ENCODE measurements at regions of chr9 and their contacts with region 1.

Region 1: GRCh38 chr9:34646211-34647083 is at the start of gene GALT:
- H3K4me3 ChIP-seq: peak within 1 kb of the TSS; percentile 82
- H3K27ac ChIP-seq: peak within 1 kb of the TSS; percentile 84
- H3K4me1 ChIP-seq: no peaks in the 10 kb centered on the region; the same call in 1 of the 2 replicates
- CTCF ChIP-seq: peak; percentile 98

Region 2: GRCh38 chr9:34584970-34585369 is 61.5 kb before region 1 on chr9:
- CTCF ChIA-PET with region 1: no interaction called
- POLR2A ChIA-PET with region 1: no interaction called
- H3K4me3 ChIP-seq: no peak overlapping the region
- H3K27ac ChIP-seq: no peak overlapping the region
- H3K4me1 ChIP-seq: no peaks in the 10 kb centered on the region
- CTCF ChIP-seq: no peak

Region 3: DNA sequence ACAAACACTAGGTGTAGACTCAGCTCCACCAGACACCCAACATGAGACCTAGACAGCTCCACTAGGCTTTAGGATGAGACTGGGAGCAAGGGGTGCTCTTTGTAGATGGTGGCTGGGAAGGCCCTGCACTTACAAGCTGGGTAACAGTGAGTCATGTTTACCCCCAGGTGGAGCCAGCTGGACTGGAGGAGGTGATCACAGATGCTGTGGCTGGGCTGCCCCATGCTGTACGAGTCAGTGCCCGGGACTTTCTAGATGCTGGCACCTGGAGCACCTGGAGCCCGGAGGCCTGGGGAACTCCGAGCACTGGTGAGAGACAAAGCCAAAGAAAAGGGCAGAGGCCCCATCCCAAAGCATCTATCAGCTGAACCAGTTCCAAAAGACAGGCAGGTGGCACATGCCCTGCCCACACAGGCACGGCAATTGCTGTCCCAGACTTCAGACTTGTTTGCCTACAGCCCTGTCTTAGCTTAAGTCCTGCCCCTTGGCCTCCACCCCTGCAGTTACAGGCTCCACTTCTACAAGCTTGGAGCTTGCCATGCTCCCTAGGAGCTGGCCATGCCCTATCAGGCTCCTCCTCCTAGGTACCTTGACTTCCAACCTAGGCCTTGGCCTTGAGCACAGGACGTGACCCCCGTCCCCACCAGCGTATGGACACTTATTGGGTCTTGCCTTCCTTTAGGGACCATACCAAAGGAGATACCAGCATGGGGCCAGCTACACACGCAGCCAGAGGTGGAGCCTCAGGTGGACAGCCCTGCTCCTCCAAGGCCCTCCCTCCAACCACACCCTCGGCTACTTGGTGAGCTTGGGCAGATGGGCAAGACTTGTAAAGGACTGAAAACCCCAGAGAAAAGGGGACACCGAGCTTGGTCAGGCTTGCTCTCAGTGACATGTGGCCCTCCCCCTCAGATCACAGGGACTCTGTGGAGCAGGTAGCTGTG is 13.4 kb after region 1 on chr9:
- CTCF ChIA-PET with region 1: interaction called, 17 read pairs
- POLR2A ChIA-PET with region 1: interaction called, 14 read pairs
- H3K4me3 ChIP-seq: no peak overlapping the region
- H3K27ac ChIP-seq: no peak overlapping the region
- H3K4me1 ChIP-seq: peaks cover 3% of the 10 kb centered on the region; the same call in 1 of the 2 replicates
- CTCF ChIP-seq: no peak

Region 4: DNA sequence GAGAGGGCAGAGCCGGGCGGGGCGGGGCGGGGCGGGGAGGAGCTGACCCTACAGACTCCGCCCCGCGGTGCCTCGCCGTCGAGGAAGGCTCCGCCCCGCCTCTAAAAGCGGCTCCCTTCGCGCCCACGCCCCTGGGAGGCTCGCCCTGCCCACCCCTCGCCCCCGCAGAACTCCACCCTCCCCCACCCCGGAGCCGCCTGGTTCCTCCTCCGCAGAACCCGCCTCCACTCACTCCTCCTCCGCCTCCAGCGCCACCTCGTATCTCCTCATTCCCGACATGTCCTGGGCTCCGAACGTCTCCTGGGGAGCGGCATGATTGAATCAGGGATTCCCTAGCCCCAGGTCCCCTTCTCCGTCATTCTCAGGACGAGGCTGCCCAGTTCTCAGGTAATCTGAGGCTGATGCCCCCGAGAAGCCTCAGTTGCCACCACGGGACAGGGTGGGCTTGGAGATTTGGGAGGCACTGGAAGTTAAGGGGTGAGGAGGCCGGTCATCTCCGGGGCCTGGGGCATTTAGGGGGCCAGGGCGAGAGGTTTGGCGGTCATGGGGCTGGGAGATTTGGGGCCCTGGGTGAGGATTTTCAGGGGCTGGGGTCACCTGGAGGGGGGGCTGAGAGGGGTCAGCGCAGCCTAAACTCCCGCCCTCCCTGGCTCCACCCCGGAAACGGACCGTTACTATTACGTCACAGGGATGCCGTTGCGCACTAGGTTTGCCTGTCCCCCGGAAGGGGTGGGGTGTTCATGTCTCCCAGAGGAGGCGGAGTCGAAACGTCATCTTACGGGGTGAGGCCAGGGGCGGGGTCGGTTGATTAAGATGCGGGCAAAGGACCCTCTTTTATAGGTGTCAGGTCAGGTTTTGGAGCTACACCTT is 19.2 kb after region 1 on chr9:
- CTCF ChIA-PET with region 1: interaction called, 17 read pairs
- POLR2A ChIA-PET with region 1: interaction called, 14 read pairs
- H3K4me3 ChIP-seq: peak overlapping the region; percentile 74
- H3K27ac ChIP-seq: peak overlapping the region; percentile 87
- H3K4me1 ChIP-seq: peaks cover 5% of the 10 kb centered on the region; the same call in 1 of the 2 replicates
- CTCF ChIP-seq: no peak; the same call in 1 of the 2 replicates

Region 5: GRCh38 chr9:34675048-34675714 is 28.7 kb after region 1 on chr9:
- CTCF ChIA-PET with region 1: interaction called, 18 read pairs
- POLR2A ChIA-PET with region 1: no interaction called
- H3K4me3 ChIP-seq: no peak overlapping the region
- H3K27ac ChIP-seq: no peak overlapping the region
- H3K4me1 ChIP-seq: no peaks in the 10 kb centered on the region
- CTCF ChIP-seq: peak; percentile 81

Region 6: DNA sequence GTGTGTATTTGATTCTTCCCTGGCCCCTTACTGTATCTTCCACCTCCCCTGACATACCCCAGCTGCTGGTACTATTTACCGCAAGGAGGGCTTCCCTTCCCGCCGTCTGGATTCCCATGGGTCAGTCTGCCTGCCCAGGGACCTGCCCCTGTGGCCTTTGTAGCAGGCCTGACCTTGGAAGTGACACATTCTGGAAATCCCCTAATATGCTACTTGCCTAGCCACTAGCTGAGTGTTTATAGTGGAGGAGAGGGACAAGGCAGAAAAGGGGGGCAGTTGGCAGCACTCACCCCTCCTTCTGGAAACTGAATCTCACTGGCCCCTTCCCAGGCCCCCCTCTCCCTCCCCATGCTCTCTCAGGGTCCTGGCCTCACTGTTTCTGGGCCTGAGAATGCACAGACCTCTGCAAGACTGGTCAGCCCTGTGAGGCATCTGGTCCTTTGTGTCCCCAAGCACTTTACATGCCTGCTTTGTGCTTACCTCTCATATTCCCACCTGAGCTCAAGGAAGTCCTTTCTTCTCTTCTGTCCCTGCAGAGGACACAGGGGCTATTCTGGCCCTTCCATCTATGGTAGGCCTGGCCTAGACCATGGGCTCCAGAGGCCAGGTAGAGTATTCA is 71.7 kb after region 1 on chr9:
- CTCF ChIA-PET with region 1: no interaction called
- POLR2A ChIA-PET with region 1: no interaction called
- H3K4me3 ChIP-seq: no peak overlapping the region
- H3K27ac ChIP-seq: no peak overlapping the region
- H3K4me1 ChIP-seq: no peaks in the 10 kb centered on the region
- CTCF ChIP-seq: no peak